Activated CD8-positive, alpha-beta memory T cell treated with anti-CD3 and anti-CD28 coated beads, Interleukin-2, amount 10 ng/mL, durations not matched to agents 7 days and 5 days (primary cell): ENCODE measurements at regions of chr10 and their contacts with region 1.

Region 1: GRCh38 chr10:119416855-119417254 is 125.7 kb downstream of the RGS10 start:
- DNase-seq: peak; percentile 80
- ATAC-seq: peak; percentile 85
- H3K4me3 Mint-ChIP-seq: no peak overlapping the region
- H3K27ac Mint-ChIP-seq: no peak overlapping the region
- H3K4me1 Mint-ChIP-seq: no peaks in the 10 kb centered on the region
- H3K27me3 Mint-ChIP-seq: no peaks in the 10 kb centered on the region

Region 2: GRCh38 chr10:119199231-119199992 is 217.4 kb before region 1 on chr10:
- CTCF ChIA-PET with region 1: interaction called, 35 read pairs
- DNase-seq: peak; percentile 64
- ATAC-seq: peak; percentile 82
- H3K4me3 Mint-ChIP-seq: no peak overlapping the region
- H3K27ac Mint-ChIP-seq: no peak overlapping the region
- H3K4me1 Mint-ChIP-seq: peaks cover 14% of the 10 kb centered on the region
- H3K27me3 Mint-ChIP-seq: peaks cover 4% of the 10 kb centered on the region

Region 3: GRCh38 chr10:119360181-119360921 is 56.5 kb before region 1 on chr10:
- CTCF ChIA-PET with region 1: no interaction called
- DNase-seq: no peak
- ATAC-seq: peak; percentile 67
- H3K4me3 Mint-ChIP-seq: no peak overlapping the region
- H3K27ac Mint-ChIP-seq: peak overlapping the region; percentile 11
- H3K4me1 Mint-ChIP-seq: peaks cover 11% of the 10 kb centered on the region
- H3K27me3 Mint-ChIP-seq: no peaks in the 10 kb centered on the region

Region 4: GRCh38 chr10:119526621-119527592 is 110.1 kb after region 1 on chr10:
- CTCF ChIA-PET with region 1: no interaction called
- DNase-seq: no peak
- ATAC-seq: peak; percentile 23
- H3K4me3 Mint-ChIP-seq: no peak overlapping the region
- H3K27ac Mint-ChIP-seq: peak overlapping the region; percentile 15
- H3K4me1 Mint-ChIP-seq: peaks cover 24% of the 10 kb centered on the region
- H3K27me3 Mint-ChIP-seq: no peaks in the 10 kb centered on the region